ENCODE measurements at regions of chr9 and their contacts with region 1.

Region 1: GRCh38 chr9:98074115-98074990 is 17.8 kb downstream of the NANS start:
- DNase-seq: no peak
- H3K4me3 ChIP-seq: no peak overlapping the region
- CTCF ChIP-seq: peak; percentile 79

Region 2: GRCh38 chr9:97803167-97804058 is 270.9 kb before region 1 on chr9:
- CTCF ChIA-PET with region 1: no interaction called
- POLR2A ChIA-PET with region 1: no interaction called
- DNase-seq: no peak
- H3K4me3 ChIP-seq: peak overlapping the region; percentile 58
- CTCF ChIP-seq: no peak

Region 3: DNA sequence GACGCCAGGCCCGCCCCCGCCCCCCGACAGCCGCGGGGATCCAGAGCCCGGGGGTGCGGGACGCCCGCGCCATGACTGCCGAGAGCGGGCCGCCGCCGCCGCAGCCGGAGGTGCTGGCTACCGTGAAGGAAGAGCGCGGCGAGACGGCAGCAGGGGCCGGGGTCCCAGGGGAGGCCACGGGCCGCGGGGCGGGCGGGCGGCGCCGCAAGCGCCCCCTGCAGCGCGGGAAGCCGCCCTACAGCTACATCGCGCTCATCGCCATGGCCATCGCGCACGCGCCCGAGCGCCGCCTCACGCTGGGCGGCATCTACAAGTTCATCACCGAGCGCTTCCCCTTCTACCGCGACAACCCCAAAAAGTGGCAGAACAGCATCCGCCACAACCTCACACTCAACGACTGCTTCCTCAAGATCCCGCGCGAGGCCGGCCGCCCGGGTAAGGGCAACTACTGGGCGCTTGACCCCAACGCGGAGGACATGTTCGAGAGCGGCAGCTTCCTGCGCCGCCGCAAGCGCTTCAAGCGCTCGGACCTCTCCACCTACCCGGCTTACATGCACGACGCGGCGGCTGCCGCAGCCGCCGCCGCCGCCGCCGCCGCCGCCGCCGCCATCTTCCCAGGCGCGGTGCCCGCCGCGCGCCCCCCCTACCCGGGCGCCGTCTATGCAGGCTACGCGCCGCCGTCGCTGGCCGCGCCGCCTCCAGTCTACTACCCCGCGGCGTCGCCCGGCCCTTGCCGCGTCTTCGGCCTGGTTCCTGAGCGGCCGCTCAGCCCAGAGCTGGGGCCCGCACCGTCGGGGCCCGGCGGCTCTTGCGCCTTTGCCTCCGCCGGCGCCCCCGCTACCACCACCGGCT is 220.3 kb before region 1 on chr9:
- CTCF ChIA-PET with region 1: no interaction called
- POLR2A ChIA-PET with region 1: no interaction called
- DNase-seq: no peak
- H3K4me3 ChIP-seq: peak overlapping the region; percentile 38
- CTCF ChIP-seq: peak; percentile 23

Region 4: GRCh38 chr9:98056269-98057137 is 17.9 kb before region 1 on chr9 and contains the start of gene NANS:
- CTCF ChIA-PET with region 1: interaction called, 72 read pairs
- POLR2A ChIA-PET with region 1: interaction called, 3 read pairs
- DNase-seq: peak; percentile 76
- H3K4me3 ChIP-seq: peak within 1 kb of the TSS; percentile 89
- CTCF ChIP-seq: peak; percentile 16

Region 5: DNA sequence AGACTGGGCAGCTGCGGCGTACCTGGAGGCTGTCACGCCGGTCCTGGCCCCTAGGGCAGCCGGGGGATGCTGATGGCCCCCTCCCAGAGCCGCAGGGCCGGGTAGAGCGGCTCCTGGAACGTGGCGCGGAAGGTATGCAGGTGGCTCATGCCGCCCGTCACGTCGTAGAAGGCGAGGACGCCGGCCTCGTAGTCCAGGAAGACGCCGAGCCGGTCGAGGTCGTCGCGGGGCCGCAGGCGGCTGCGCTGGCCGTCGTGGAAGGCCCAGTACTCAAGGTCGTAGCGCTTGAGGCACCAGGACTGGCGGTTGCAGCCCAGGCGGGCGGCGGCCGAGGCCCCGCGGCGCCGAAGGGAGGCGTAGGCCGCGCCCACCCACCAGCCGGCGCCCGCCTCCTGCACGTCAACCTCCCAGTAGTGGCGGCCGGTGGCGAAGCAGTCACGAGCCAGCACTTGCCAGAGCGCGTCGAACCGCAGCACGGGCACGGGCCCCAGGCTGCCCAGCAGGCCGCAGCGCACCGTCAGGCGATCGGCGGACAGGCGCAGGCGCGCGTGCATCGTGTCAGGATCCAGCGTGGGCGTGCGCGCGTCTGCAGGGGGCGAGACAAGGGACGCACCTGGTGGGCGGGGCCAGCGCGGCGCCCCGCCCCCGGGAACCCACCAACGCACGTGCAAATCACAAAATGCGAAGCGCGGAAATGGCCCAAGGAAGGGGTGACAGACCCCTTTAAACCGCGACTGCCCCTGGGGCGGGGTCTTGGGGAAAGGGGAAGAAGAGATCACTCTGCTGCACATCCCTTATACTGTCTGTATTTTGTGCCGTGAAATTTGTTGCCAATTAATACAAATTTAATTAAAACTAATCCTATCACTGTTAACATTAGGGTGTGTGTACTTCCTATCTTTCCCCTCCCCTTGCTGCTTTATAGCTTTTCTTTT is 13.3 kb after region 1 on chr9:
- CTCF ChIA-PET with region 1: interaction called, 33 read pairs
- POLR2A ChIA-PET with region 1: no interaction called
- DNase-seq: no peak
- H3K4me3 ChIP-seq: peak overlapping the region; percentile 45
- CTCF ChIP-seq: no peak

Region 6: GRCh38 chr9:98263482-98264357 is 189.4 kb after region 1 on chr9:
- CTCF ChIA-PET with region 1: interaction called, 41 read pairs
- POLR2A ChIA-PET with region 1: no interaction called
- DNase-seq: peak; percentile 29
- H3K4me3 ChIP-seq: no peak overlapping the region
- CTCF ChIP-seq: peak; percentile 96